ENCODE measurements at regions of chr15 and their contacts with region 1.

Region 1: DNA sequence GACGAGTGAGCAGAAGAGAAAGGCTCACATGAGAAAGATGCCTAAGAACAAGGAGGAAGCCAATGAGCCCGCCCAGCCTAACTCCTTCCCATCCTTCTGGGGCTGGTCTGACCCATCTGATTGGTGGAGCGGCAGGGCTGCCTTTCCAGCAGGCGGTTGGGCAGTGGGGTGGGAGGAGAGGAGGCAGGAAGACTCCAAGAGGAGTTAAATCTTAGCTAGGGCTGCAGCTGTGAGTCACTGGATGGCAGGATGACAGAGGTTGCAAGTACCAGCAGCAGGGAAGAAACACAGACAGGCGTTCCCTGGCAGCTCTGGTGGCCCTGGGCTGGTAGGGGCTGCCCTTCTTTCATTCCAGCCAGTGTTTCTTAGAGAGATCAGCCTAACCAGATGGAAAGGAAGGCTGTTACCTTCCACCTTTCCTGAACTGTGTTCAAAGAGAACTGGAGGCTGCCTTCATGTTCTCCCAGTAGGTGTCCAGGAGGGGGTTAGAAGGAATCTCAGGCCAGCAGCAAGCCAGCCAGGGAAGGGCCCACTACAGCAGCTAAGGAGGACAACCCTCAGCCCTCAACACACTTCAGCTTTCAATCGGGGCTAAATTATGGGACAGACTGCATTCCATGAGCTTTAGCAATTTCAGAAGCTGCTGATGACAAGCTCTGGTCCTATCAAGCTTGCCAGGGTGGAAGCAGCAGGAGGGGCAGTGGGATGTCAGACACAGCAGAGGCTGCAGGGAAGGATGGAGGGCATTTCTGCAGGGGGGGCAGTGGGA is 50.3 kb downstream of the CHSY1 start:
- DNase-seq: peak; percentile 95
- H3K4me3 ChIP-seq: peak overlapping the region in 1 of 4 donors; percentile 4
- H3K27ac ChIP-seq: peak overlapping the region; percentile 60 to 73 (median 68)
- H3K4me1 ChIP-seq: peaks cover 25 to 81% (median 65%) of the 10 kb centered on the region in 4 donors
- H3K27me3 ChIP-seq: no peaks in the 10 kb centered on the region
- CTCF ChIP-seq: no peak
- EP300 ChIP-seq: no peak
- POLR2A ChIP-seq: no peak

Region 2: GRCh38 chr15:100318884-100319283 is 882.7 kb before region 1 on chr15:
- intact Hi-C with region 1: no loop called
- DNase-seq: no peak
- H3K4me3 ChIP-seq: no peak overlapping the region
- H3K27ac ChIP-seq: no peak overlapping the region
- H3K4me1 ChIP-seq: no peaks in the 10 kb centered on the region
- H3K27me3 ChIP-seq: no peaks in the 10 kb centered on the region
- CTCF ChIP-seq: no peak
- EP300 ChIP-seq: no peak
- POLR2A ChIP-seq: no peak

Region 3: GRCh38 chr15:101246824-101247745 is 45.5 kb after region 1 on chr15:
- intact Hi-C with region 1: loop called (anchors 5 kb)
- DNase-seq: no peak
- H3K4me3 ChIP-seq: no peak overlapping the region
- H3K27ac ChIP-seq: peak overlapping the region in 3 of 4 donors; percentile 13 to 21 (median 15)
- H3K4me1 ChIP-seq: peaks cover 54 to 87% (median 84%) of the 10 kb centered on the region in 4 donors
- H3K27me3 ChIP-seq: no peaks in the 10 kb centered on the region
- CTCF ChIP-seq: no peak
- EP300 ChIP-seq: no peak
- POLR2A ChIP-seq: no peak

Region 4: GRCh38 chr15:101358895-101359294 is 157.3 kb after region 1 on chr15:
- intact Hi-C with region 1: no loop called
- DNase-seq: no peak
- H3K4me3 ChIP-seq: no peak overlapping the region
- H3K27ac ChIP-seq: no peak overlapping the region
- H3K4me1 ChIP-seq: peaks cover 0 to 13% (median 0%) of the 10 kb centered on the region in 4 donors
- H3K27me3 ChIP-seq: peaks cover 0 to 7% (median 0%) of the 10 kb centered on the region in 4 donors
- CTCF ChIP-seq: no peak
- EP300 ChIP-seq: no peak
- POLR2A ChIP-seq: no peak

Region 5: GRCh38 chr15:101407439-101407838 is 205.8 kb after region 1 on chr15:
- intact Hi-C with region 1: no loop called
- DNase-seq: no peak
- H3K4me3 ChIP-seq: no peak overlapping the region
- H3K27ac ChIP-seq: no peak overlapping the region
- H3K4me1 ChIP-seq: no peaks in the 10 kb centered on the region
- H3K27me3 ChIP-seq: no peaks in the 10 kb centered on the region
- CTCF ChIP-seq: no peak
- EP300 ChIP-seq: no peak
- POLR2A ChIP-seq: no peak

Measured in esophagus muscularis mucosa (tissue), 4 donors.